Heart right ventricle (tissue), 16 donors: ENCODE measurements at regions of chr21 and their contacts with region 1.

Region 1: GRCh38 chr21:38355992-38356797 is 99.4 kb downstream of the KCNJ15 start:
- DNase-seq: peak; percentile 76 to 85
- ATAC-seq: peak; percentile 71 to 91 (median 88)
- H3K4me3 ChIP-seq: no peak overlapping the region
- H3K27ac ChIP-seq: no peak overlapping the region
- H3K4me1 ChIP-seq: peaks cover 0 to 20% (median 6%) of the 10 kb centered on the region in 9 donors
- H3K27me3 ChIP-seq: peaks cover 0 to 13% (median 3%) of the 10 kb centered on the region in 7 donors
- CTCF ChIP-seq: peak; percentile 89 to 99 (median 97)

Region 2: DNA sequence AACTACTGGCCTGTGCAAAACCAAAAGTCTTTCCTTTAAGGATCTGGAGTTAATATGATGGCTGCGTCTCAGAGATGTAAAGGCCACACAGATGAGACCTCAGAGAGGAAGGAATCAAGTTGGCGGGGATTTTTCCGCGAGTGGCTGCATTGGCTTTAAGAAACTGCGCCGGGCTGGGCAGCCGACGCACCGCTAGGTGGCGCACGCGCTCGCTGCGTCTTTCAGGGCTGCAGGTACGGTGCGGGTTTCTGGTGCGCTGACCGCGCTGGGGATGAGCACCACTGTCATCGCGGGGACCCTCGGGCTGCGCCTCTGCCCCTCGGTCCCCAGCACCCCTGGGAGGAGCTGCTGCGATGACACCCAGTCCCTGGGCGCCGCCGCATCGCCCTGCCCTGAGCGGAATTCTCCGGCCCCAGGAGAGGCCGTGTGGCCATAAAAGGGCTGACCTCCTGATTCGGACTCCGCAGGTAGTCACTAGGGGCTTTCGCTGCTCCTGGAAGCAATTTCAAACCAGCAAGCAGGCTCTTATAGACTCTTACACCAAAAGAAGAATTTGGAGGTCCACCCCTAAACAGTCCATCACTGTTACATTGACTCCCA is 680.9 kb before region 1 on chr21:
- intact Hi-C with region 1: loop called in 3 of 10 experiments (anchors 2 to 10 kb)
- DNase-seq: peak; percentile 48 to 65
- ATAC-seq: peak; percentile 70 to 88 (median 76)
- H3K4me3 ChIP-seq: peak overlapping the region in 3 of 10 donors; percentile 10 to 30 (median 26)
- H3K27ac ChIP-seq: no peak overlapping the region
- H3K4me1 ChIP-seq: peaks cover 0 to 13% (median 0%) of the 10 kb centered on the region in 9 donors
- H3K27me3 ChIP-seq: peaks cover 0 to 32% (median 19%) of the 10 kb centered on the region in 7 donors
- CTCF ChIP-seq: peak; percentile 86 to 98 (median 96)

Region 3: DNA sequence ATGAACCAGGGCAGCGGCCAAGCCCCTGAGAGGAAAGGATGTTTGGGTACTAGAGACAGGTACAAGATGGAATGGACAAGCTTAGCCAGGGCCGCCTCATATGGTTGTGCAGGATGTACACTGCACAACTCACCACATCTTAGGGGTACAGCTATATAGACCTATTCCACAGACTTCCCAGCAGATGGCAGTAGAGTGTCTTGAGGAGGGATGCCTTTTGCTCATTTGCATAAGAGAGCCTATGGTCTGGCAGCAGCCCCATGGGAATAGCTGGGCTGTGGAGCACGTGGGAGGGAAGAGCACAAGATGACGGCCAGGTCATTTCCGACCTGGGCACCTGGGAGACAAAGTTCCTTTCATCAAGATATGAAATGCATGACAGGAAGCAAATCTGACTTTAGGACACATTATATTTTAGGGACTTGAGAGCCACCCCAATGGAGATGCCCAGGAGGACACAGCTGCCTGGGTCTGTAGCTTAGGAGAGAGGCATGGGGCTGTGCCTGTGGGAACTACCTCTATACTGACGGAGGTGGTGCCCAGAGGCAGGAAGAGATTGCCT is 655.5 kb before region 1 on chr21:
- intact Hi-C with region 1: loop called in 7 of 10 experiments (anchors 5 to 10 kb)
- DNase-seq: peak in 1 of 2 donors; percentile 11
- ATAC-seq: peak in 7 of 8 donors; percentile 29 to 85 (median 70)
- H3K4me3 ChIP-seq: no peak overlapping the region
- H3K27ac ChIP-seq: no peak overlapping the region
- H3K4me1 ChIP-seq: no peaks in the 10 kb centered on the region
- H3K27me3 ChIP-seq: peaks cover 0 to 13% (median 0%) of the 10 kb centered on the region in 7 donors
- CTCF ChIP-seq: peak; percentile 33 to 75 (median 65)

Region 4: DNA sequence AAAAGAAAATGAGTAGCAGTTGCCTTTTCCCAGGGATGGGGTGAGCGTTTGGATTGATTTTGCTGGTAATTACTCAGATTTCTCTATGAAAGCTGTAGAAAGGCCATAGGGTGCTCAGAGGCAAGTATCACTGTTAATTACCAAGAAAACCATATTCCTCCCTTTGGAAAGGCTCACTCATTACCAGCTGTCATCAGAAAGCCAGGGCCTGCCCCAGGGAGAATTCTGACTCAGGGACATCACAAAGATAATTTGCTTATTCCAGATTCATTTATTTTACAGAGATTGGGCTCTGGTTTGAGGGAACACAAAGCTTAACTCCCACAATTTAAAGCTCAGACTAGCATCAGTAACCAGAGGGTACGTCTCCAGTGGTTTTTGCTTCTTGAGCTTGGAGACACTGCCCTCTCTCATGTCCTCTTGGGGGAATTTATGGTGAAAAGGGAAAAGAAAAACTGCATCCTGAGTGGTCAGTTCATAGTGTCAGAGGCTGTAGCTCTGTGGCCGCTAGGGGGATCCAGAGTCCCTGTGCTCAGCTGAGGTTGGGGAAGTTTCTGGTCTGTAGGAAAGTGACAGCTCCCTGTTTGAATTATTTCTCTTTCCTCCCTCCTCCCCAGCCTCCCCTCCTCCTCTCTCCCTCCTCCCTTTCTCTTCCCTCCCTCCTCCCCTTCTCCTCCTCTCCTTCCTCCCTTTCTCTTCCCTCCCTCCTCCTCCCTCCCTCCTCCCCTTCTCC is 644.2 kb before region 1 on chr21:
- intact Hi-C with region 1: loop called in 8 of 10 experiments (anchors 5 to 10 kb)
- DNase-seq: peak; percentile 59 to 63
- ATAC-seq: peak; percentile 73 to 91 (median 82)
- H3K4me3 ChIP-seq: no peak overlapping the region
- H3K27ac ChIP-seq: no peak overlapping the region
- H3K4me1 ChIP-seq: peaks cover 0 to 20% (median 12%) of the 10 kb centered on the region in 9 donors
- H3K27me3 ChIP-seq: peaks cover 0 to 6% (median 0%) of the 10 kb centered on the region in 7 donors
- CTCF ChIP-seq: peak; percentile 61 to 86 (median 80)

Region 5: GRCh38 chr21:37939251-37939650 is 416.9 kb before region 1 on chr21:
- intact Hi-C with region 1: no loop called
- DNase-seq: no peak
- ATAC-seq: no peak
- H3K4me3 ChIP-seq: no peak overlapping the region
- H3K27ac ChIP-seq: no peak overlapping the region
- H3K4me1 ChIP-seq: peaks cover 0 to 7% (median 0%) of the 10 kb centered on the region in 9 donors
- H3K27me3 ChIP-seq: peaks cover 0 to 4% (median 0%) of the 10 kb centered on the region in 7 donors
- CTCF ChIP-seq: no peak

Region 6: DNA sequence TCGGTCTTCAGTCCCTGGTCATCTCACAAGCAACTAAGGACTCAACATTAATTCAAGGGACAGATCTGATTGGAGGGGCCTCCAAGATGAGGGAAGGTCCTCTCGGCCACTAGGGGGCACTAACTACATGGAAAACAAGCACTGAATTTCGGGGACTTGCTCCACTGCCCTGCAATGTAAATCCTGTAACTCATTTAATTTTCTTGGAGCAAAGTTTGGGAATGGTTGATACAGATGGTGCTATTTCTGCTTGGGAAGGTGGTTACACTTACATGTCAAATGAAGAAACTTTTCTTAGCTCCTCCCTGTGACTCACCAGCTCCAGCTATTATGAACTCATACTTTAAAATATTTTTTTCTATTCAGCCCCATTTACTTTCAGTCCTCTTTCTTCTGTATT is 196.8 kb before region 1 on chr21:
- intact Hi-C with region 1: loop called (anchors 1 to 5 kb)
- DNase-seq: peak; percentile 11 to 62
- ATAC-seq: peak in 4 of 8 donors; percentile 33 to 74 (median 48)
- H3K4me3 ChIP-seq: no peak overlapping the region
- H3K27ac ChIP-seq: no peak overlapping the region
- H3K4me1 ChIP-seq: peaks cover 0 to 5% (median 0%) of the 10 kb centered on the region in 9 donors
- H3K27me3 ChIP-seq: peaks cover 0 to 33% (median 15%) of the 10 kb centered on the region in 7 donors
- CTCF ChIP-seq: peak; percentile 68 to 86 (median 81)

Region 7: GRCh38 chr21:38170280-38170679 is 185.9 kb before region 1 on chr21:
- intact Hi-C with region 1: loop called in 2 of 10 experiments (anchors 2 to 5 kb)
- DNase-seq: peak in 1 of 2 donors; percentile 25
- ATAC-seq: peak in 5 of 8 donors; percentile 31 to 52 (median 46)
- H3K4me3 ChIP-seq: no peak overlapping the region
- H3K27ac ChIP-seq: peak overlapping the region in 1 of 10 donors; percentile 54
- H3K4me1 ChIP-seq: peaks cover 0 to 29% (median 17%) of the 10 kb centered on the region in 9 donors
- H3K27me3 ChIP-seq: peaks cover 0 to 3% (median 0%) of the 10 kb centered on the region in 7 donors
- CTCF ChIP-seq: peak in 7 of 9 donors; percentile 34 to 59 (median 46)

Region 8: GRCh38 chr21:38219049-38219628 is 137.1 kb before region 1 on chr21:
- intact Hi-C with region 1: loop called (anchors 1 to 5 kb)
- DNase-seq: peak; percentile 20 to 72
- ATAC-seq: peak; percentile 64 to 89 (median 78)
- H3K4me3 ChIP-seq: no peak overlapping the region
- H3K27ac ChIP-seq: peak overlapping the region in 1 of 10 donors; percentile 84
- H3K4me1 ChIP-seq: peaks cover 0 to 20% (median 0%) of the 10 kb centered on the region in 9 donors
- H3K27me3 ChIP-seq: peaks cover 0 to 4% (median 0%) of the 10 kb centered on the region in 7 donors
- CTCF ChIP-seq: peak; percentile 87 to 98 (median 96)